Activated T-helper 1 cell treated with anti-CD3 and anti-CD28 coated beads, Interleukin-12 subunit alpha, Interleukin-12 subunit beta, Interleukin-2, Interleukin-4 antibody, amounts not matched to agents 30 ng/mL and 10 ng/mL and 1 ng/mL, durations not matched to agents 14 hours and 24 hours and 36 hours (primary cell): ENCODE measurements at regions of chr21 and their contacts with region 1.

Region 1: DNA sequence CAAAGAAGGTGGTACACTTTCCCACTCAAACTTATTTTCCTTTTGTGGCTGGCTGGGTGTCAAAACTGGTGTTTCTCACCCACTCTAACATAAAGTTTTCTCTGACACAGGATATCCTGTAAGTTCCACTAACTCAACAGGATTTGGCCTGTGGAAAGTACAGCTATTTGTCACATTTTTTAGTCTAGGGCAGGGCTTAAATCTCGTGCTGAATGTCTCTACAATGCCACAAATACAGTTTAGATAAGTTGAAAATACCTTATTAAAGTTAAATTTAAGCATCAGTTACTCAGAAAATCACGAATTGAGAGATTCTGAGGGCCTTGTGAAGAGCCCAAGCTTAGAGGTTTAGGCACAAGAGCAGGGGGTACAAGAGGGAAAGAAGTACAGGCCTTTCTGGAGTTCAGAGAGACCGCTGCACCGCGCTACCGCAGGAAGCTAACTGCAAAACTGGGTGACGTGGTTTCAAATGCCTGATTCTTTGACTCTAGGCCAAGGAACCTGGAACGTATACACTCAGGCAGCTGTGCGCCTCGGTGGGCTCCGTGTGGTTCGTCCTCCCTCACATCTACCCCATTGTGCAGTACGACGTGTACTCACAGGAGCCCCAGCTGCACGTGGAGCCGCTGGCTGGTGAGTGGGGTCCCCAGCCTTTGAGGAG is 23.4 kb upstream of the PWP2 start:
- DNase-seq: peak; percentile 71
- H3K4me3 Mint-ChIP-seq: peak overlapping the region; percentile 86
- H3K27ac Mint-ChIP-seq: peak overlapping the region; percentile 98
- H3K4me1 Mint-ChIP-seq: peaks cover 89% of the 10 kb centered on the region
- H3K27me3 Mint-ChIP-seq: no peaks in the 10 kb centered on the region

Region 2: DNA sequence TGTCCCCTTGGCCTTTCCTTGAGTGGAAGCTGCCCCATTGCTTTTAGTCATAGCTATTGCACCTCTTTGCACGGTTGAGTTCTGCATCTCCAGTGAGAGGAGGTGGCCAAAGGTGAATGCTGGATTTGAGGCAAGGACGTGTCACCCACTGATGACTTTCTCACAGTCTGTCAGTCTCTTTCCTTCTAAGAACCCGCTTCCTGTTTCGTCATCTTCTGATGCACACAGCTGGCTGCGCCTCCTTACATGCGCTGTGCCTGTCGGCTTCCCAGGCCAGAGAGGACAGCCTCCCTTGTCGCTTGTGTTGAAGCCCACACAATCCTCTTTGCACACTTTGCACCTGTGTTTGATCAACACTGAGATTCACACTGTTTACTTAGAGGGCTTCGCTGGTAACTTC is 18.3 kb before region 1 on chr21:
- intact Hi-C with region 1: loop called (anchors 1 kb)
- DNase-seq: peak; percentile 78
- H3K4me3 Mint-ChIP-seq: peak overlapping the region; percentile 71
- H3K27ac Mint-ChIP-seq: peak overlapping the region; percentile 94
- H3K4me1 Mint-ChIP-seq: peaks cover 51% of the 10 kb centered on the region
- H3K27me3 Mint-ChIP-seq: no peaks in the 10 kb centered on the region

Region 3: GRCh38 chr21:44094832-44095231 is 11.1 kb after region 1 on chr21:
- intact Hi-C with region 1: no loop called
- DNase-seq: no peak
- H3K4me3 Mint-ChIP-seq: no peak overlapping the region
- H3K27ac Mint-ChIP-seq: no peak overlapping the region
- H3K4me1 Mint-ChIP-seq: peaks cover 14% of the 10 kb centered on the region
- H3K27me3 Mint-ChIP-seq: no peaks in the 10 kb centered on the region